ENCODE measurements at regions of chr10 and their contacts with region 1.

Region 1: DNA sequence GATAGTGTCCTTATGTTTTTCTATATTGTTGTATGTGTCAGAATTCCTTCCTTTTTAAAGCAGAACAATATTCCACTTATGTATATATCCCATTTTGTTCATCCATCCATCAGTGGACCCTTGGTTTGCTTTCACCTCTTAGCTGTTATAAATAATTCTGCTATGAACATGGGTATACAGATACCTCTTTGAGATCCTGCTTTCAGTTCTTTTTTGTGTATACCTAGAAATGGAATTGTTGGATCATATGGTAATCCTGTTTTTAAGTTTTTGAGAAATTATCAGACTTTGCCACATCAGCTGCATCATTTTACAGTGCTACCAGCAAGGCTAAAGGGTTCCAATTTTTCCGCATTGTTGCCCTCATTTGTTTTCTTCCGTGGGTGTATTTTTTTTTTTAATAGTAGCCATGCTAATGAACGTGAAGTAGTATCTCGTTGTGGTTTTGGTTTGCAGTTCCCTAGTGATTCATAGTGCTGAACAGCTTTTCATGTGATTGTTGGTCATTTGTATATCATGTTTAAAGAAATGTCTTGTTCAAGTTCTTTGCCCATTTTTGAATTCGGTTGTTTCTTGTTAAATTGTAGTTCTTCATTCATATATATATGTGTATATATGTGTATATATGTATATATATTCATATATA is 87.8 kb downstream of the LCOR start:
- DNase-seq: no peak
- ATAC-seq: no peak

Region 2: DNA sequence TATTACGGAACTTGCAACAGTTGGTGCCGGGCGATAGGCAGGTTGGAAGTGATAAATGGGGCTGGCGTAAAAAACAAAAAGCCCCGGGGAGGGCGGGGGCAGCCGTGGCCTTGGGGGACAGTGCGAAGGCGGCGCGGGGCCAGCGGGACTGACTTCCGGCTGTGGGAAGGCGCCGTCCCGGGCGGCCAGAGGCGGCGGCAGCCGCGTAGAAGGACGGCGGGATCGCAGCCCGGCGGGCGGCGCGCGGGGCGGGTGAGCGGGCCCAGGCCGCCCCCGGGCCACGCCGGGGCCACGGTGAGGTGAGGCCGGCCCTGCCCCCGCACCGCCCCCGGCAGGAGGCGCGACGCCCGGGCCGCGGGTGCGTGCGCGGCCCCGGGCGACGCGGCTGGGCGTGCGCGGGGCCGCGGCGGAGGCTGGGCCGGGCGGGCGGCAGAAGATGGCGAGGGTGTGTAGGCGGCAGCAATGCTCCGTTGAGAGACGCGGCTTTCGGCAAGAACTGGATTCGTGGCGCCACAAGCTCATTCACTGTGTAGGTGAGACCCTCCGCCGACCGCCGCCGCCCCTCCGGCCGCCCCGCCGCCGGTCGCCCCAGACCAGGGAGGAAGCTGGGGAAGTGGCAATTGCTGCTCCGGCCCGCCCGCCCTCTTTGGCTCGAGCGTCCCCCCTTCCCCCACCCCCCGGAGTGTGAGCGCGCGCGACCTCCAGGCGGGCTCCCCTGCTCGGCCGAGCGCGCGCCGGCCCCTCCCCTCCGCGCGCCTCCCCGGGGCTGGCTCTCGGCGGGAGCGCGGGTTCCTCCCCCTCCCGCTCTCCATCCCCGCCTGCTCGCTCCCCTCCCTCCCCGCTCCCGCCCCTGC is 87.8 kb before region 1 on chr10 and contains the start of gene LCOR:
- intact Hi-C with region 1: loop called in 1 of 2 experiments (anchors 5 kb)
- DNase-seq: peak; percentile 88
- ATAC-seq: peak; percentile 89 to 92
- total RNA-seq, gene LCOR: 20.2 to 21.3 TPM

Region 3: DNA sequence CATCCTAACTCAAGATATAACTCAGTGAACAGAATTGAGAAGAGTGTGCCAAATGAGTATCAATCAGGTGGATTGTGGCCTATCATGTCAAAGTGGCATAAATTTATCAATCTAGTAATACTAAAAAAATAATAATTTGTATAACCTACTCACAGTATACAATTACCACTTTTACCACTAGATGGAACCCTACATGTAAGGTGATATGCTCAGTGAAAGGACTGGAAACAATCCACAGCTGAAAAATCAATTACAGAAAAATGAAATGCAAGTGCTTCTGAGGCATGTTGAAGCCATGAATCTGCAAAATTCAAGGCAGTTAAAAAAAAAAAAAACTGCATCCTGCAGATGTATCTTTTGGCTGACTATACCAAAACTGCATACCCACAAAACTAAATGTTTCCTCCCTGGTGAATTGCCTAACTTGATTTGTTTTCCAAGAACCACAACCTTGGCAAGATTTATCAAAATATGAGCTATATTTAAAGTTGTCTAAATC is 358.6 kb after region 1 on chr10:
- intact Hi-C with region 1: no loop called
- DNase-seq: no peak
- ATAC-seq: peak; percentile 92 to 93

Measured in left cardiac atrium (tissue), 4 donors.